ENCODE measurements at regions of chr17 and their contacts with region 1.

Region 1: DNA sequence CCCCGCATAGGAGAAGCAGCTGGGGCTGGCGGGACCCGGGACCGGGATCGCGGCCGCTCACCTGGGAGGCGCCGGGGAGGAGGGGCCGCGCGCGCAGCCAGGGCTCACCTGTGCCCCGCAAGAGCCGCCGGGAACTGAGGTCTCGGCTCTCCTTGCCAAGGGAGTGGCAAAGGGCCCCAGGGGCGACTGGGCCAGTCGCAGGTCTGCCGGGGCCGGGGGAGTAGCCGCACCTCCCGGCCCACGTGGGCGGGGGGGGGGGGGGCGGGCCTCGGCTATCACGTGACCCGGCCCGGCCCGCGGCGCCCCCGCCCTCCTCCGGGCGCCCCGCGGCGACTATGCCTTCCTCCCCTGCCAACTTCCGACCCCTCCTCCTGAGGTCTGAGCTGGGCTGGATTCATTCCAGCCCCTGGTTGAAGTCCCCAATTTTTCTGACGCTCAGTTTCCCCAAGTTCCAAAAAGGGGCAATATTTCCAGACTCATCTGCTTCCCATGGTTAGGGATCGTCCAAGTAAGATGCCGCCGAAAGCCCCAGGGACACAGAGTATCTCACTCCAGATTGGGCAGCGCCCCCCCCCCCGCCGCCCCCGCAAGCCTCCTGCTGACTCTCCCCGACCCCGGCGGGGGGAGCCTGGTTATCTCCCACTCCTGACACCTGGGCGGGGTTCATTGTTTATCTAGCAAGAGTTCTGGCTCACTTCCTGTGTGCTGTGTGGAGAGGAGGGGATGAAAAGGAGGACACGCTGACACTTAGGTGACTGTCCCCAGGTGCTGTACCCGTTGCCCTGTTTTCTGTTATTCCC is at the start of gene TMC6:
- DNase-seq: peak in 32 of 42 donors; percentile 40 to 83 (median 61)

Region 2: GRCh38 chr17:78082988-78083387 is 45.8 kb before region 1 on chr17:
- intact Hi-C with region 1: no loop called
- DNase-seq: no peak

Region 3: GRCh38 chr17:78176548-78177025 is 47.8 kb after region 1 on chr17:
- intact Hi-C with region 1: loop called (anchors 5 kb)
- DNase-seq: peak; percentile 59 to 89 (median 78)